ENCODE measurements at regions of chr7 and their contacts with region 1.

Region 1: GRCh38 chr7:4883374-4884144 is at the start of gene RADIL:
- DNase-seq: peak; percentile 87 to 98
- H3K4me3 ChIP-seq: peak within 1 kb of the TSS; percentile 43
- CTCF ChIP-seq: no peak
- POLR2A ChIP-seq: no peak
- total RNA-seq, gene RADIL: 1.5 to 2.6 (median 2.1) TPM

Region 2: GRCh38 chr7:4809091-4809591 is 74.4 kb before region 1 on chr7:
- intact Hi-C with region 1: loop called (anchors 10 kb)
- DNase-seq: no peak
- H3K4me3 ChIP-seq: no peak overlapping the region
- CTCF ChIP-seq: no peak
- POLR2A ChIP-seq: no peak

Region 3: DNA sequence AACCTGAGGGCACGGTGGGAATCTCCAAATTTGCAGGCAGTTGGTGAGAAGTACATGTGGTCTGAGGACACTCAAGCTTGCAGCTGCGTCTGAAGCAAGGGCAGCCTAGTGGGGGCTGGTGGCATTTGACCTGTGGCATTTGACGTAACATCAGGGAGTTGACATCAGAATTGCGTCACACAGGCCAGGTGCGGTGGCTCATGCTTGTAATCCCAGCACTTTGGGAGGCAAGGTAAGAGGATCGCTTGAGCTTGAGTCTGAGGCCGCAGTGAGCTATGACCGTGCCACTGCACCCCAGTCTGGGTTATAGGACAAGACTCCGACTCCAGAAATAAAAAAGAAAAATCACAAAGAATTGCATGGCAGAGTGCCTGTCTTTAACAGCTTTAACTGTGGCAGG is 136.5 kb after region 1 on chr7:
- intact Hi-C with region 1: no loop called
- DNase-seq: peak in 1 of 2 donors; percentile 53
- H3K4me3 ChIP-seq: no peak overlapping the region
- CTCF ChIP-seq: no peak
- POLR2A ChIP-seq: no peak